ENCODE measurements at regions of chr2 and their contacts with region 1.

Region 1: DNA sequence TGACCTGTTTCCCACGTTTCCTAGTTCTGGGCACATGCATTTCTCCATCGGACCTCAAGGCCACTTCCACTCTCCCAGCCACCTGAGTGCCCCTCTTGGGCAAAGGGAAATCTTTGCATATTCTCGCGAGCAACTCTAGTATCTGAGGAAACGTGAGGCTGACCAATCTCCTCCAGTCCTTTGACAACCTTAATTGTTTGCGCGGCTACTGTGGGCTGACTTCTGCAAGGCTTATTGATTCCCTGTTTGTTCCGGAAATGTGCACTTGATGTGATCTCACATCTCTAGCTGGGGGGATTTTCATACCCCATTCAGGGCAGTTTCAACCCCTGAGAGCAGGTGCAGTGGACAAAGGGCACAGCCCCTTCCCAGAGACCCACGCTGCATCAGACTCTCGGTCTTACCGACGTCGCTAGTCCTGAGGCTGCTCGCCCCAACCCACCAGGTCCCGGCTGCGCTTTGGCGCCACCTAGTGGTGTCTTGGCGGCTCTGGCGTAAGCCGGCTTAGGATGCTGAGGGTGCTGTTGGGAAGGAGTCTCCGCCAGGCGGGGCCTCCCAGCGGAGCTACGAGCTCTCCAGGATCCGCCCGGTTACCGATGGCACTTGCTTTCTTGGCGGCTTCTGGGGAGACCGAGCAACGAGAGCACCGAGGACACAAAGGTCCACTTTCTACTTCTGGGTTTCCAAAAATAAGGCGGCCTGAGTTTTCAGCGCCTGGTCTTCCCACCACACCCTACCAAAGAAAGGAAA is 24.8 kb upstream of the SPR start:
- DNase-seq: peak; percentile 85 to 89 (median 87)
- H3K4me3 ChIP-seq: peak overlapping the region in 3 of 7 experiments; percentile 38 to 57 (median 40)
- H3K27ac ChIP-seq: no peak overlapping the region
- H3K4me1 ChIP-seq: peaks cover 0 to 10% (median 8%) of the 10 kb centered on the region in 4 experiments
- H3K27me3 ChIP-seq: peaks cover 0 to 40% (median 16%) of the 10 kb centered on the region in 5 experiments

Region 2: GRCh38 chr2:72394671-72395070 is 467.7 kb before region 1 on chr2:
- CTCF ChIA-PET with region 1: no interaction called
- POLR2A ChIA-PET with region 1: no interaction called
- DNase-seq: no peak
- H3K4me3 ChIP-seq: no peak overlapping the region
- H3K27ac ChIP-seq: no peak overlapping the region
- H3K4me1 ChIP-seq: no peaks in the 10 kb centered on the region
- H3K27me3 ChIP-seq: peaks cover 0 to 2% (median 0%) of the 10 kb centered on the region in 5 experiments

Region 3: GRCh38 chr2:72770879-72771461 is 91.4 kb before region 1 on chr2:
- CTCF ChIA-PET with region 1: interaction called, 21 read pairs
- POLR2A ChIA-PET with region 1: no interaction called
- DNase-seq: peak; percentile 73 to 88 (median 85)
- H3K4me3 ChIP-seq: no peak overlapping the region
- H3K27ac ChIP-seq: no peak overlapping the region
- H3K4me1 ChIP-seq: no peaks in the 10 kb centered on the region
- H3K27me3 ChIP-seq: no peaks in the 10 kb centered on the region

Region 4: GRCh38 chr2:72837171-72837570 is 25.2 kb before region 1 on chr2:
- CTCF ChIA-PET with region 1: interaction called, 10 read pairs
- POLR2A ChIA-PET with region 1: no interaction called
- DNase-seq: no peak
- H3K4me3 ChIP-seq: no peak overlapping the region
- H3K27ac ChIP-seq: no peak overlapping the region
- H3K4me1 ChIP-seq: peaks cover 0 to 6% (median 2%) of the 10 kb centered on the region in 4 experiments
- H3K27me3 ChIP-seq: peaks cover 0 to 8% (median 0%) of the 10 kb centered on the region in 5 experiments